Heart left ventricle (tissue), 16 donors: ENCODE measurements at regions of chr20 and their contacts with region 1.

Region 1: DNA sequence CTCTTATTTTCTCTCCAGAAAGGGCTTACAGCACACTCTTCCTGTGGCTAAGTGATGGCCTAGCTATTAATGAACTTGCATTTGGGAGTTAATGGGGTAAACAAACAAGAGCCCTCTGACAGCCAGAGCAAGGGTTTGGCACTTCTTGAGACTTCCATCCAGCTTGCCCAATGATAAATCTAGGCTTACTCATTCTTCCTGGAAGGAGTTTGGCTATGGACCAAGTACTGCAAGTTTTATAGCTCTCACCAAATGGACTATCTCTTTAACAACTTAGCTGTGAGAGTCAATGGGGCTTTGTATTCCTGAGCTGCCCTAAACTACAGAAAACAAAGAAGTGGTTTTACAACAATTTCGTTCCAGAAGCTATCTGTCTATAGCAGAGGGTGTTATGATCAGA is 16.7 kb upstream of the PI3 start:
- DNase-seq: no peak
- ATAC-seq: no peak
- H3K4me3 ChIP-seq: no peak overlapping the region
- H3K27ac ChIP-seq: no peak overlapping the region
- H3K4me1 ChIP-seq: peaks cover 0 to 4% (median 0%) of the 10 kb centered on the region in 12 donors
- H3K27me3 ChIP-seq: no peaks in the 10 kb centered on the region
- CTCF ChIP-seq: no peak
- POLR2A ChIP-seq: no peak

Region 2: DNA sequence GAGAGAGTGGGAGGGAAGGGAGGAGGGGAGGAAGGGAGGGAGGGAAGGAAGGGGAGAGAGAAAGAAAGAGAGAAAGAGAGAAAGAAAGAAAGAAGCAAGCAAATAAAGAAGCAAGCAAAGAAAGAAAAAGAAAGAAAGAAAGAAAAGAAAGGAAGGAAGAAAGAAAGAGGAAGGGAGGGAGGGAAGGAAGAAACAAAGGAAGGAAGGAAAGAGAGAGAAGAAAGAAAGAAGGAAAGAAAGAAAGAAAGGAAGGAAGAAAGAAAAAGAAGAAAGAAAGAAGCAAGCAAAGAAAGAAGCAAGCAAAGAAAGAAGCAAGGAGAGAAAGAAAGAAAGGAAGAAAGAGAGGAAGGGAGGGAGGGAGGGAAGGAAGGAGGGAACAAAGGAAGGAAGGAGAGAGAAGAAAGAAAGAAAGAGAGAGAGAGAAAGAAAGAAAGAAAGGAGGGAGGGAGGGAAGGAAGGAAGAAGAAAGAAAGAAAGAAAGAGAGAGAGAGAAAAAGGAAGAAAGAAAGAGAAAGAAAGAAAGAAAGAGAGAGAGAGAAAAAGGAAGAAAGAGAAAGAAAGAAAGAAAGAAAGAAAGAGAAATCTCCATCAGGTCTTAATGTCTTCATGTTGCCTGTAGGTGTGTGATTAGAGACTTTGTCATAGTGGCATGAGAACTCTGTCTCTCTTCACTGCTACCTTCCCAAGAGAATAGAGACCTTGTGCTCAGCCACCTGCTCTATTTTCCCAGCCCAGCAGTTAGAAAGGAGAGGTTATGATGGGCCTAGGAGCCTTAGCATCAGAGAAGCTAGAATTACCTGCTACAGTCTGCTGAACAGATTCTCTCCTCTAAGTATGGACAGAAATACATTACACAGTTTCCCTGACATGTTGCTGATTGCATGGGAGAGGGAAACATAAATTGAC is 53.9 kb after region 1 on chr20:
- intact Hi-C with region 1: loop called in 1 of 10 experiments (anchors 10 kb)
- DNase-seq: no peak
- ATAC-seq: no peak
- H3K4me3 ChIP-seq: no peak overlapping the region
- H3K27ac ChIP-seq: no peak overlapping the region
- H3K4me1 ChIP-seq: no peaks in the 10 kb centered on the region
- H3K27me3 ChIP-seq: peaks cover 0 to 11% (median 0%) of the 10 kb centered on the region in 9 donors
- CTCF ChIP-seq: no peak
- POLR2A ChIP-seq: no peak